Left lung (tissue), 14 donors: ENCODE measurements at regions of chrX and their contacts with region 1.

Region 1: DNA sequence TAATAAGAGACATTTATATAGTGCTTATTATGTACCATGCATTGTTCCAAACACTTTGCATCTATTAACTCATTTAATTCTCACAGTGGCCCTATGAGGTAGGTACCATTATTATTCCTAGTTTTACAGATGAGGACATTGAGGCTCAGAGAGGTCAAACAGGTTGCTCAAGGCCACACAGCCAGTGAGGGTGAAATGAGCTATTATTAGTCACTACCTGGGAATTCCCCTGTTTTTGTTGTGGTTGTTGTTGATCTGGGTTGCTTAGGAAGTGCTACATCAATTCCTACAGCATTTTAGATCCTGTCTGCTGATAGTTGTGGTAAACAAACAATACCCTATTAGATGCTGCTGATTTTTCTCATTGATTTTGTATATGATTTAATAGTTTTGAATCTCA is 41.2 kb downstream of the APLN start:
- DNase-seq: no peak
- ATAC-seq: no peak
- H3K4me3 ChIP-seq: no peak overlapping the region
- H3K27ac ChIP-seq: no peak overlapping the region
- H3K4me1 ChIP-seq: no peaks in the 10 kb centered on the region
- H3K27me3 ChIP-seq: no peaks in the 10 kb centered on the region
- CTCF ChIP-seq: no peak

Region 2: GRCh38 chrX:129823115-129823514 is 209.5 kb after region 1 on chrX:
- intact Hi-C with region 1: loop called in 1 of 2 experiments (anchors 10 kb)
- DNase-seq: peak in 1 of 4 donors; percentile 29
- ATAC-seq: peak; percentile 81
- H3K4me3 ChIP-seq: no peak overlapping the region
- H3K27ac ChIP-seq: no peak overlapping the region
- H3K4me1 ChIP-seq: no peaks in the 10 kb centered on the region
- H3K27me3 ChIP-seq: no peaks in the 10 kb centered on the region
- CTCF ChIP-seq: peak; percentile 26 to 45

Region 3: GRCh38 chrX:130009658-130010223 is 396.1 kb after region 1 on chrX:
- intact Hi-C with region 1: no loop called
- DNase-seq: no peak
- ATAC-seq: no peak
- H3K4me3 ChIP-seq: no peak overlapping the region
- H3K27ac ChIP-seq: no peak overlapping the region
- H3K4me1 ChIP-seq: no peaks in the 10 kb centered on the region
- H3K27me3 ChIP-seq: no peaks in the 10 kb centered on the region
- CTCF ChIP-seq: no peak